Activated CD4-positive, alpha-beta T cell treated with anti-CD3 and anti-CD28 coated beads for 36 hours (primary cell): ENCODE measurements at regions of chr15 and their contacts with region 1.

Region 1: DNA sequence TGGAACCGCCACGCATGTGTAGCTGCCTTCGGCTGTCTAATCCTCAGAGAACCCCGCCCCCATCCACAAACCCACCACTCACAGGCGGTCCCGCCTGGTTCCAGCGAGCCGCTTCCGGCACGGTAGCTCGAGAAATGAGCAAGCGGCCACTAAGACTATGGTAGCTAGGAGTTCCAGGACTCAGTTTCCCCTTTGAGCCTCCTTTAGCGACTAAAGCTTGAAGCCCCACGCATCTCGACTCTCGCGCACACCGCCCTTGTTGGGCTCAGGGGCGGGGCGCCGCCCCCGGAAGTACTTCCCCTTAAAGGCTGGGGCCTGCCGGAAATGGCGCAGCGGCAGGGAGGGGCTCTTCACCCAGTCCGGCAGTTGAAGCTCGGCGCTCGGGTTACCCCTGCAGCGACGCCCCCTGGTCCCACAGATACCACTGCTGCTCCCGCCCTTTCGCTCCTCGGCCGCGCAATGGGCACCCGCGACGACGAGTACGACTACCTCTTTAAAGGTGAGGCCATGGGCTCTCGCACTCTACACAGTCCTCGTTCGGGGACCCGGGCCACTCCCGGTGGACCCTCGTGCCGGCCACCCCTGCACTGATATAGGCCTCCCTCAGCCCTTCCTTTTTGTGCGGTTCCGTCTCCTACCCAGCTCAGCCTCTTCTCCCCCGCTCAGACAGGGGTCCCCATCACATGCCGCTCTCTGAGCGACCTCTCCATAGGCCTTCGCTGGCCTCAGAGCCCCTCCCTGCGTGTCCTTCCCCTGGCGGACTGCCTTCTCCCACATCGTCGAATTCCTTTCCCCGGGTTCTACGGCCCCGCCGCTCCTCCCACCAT is at the start of gene RAB11A:
- DNase-seq: peak; percentile 97
- ATAC-seq: peak; percentile 92
- H3K4me3 Mint-ChIP-seq: peak within 1 kb of the TSS; percentile 99
- H3K27ac Mint-ChIP-seq: peak within 1 kb of the TSS; percentile 91
- H3K4me1 Mint-ChIP-seq: peaks cover 30% of the 10 kb centered on the region
- H3K27me3 Mint-ChIP-seq: no peaks in the 10 kb centered on the region
- total RNA-seq, gene RAB11A: 129 to 142 TPM

Region 2: DNA sequence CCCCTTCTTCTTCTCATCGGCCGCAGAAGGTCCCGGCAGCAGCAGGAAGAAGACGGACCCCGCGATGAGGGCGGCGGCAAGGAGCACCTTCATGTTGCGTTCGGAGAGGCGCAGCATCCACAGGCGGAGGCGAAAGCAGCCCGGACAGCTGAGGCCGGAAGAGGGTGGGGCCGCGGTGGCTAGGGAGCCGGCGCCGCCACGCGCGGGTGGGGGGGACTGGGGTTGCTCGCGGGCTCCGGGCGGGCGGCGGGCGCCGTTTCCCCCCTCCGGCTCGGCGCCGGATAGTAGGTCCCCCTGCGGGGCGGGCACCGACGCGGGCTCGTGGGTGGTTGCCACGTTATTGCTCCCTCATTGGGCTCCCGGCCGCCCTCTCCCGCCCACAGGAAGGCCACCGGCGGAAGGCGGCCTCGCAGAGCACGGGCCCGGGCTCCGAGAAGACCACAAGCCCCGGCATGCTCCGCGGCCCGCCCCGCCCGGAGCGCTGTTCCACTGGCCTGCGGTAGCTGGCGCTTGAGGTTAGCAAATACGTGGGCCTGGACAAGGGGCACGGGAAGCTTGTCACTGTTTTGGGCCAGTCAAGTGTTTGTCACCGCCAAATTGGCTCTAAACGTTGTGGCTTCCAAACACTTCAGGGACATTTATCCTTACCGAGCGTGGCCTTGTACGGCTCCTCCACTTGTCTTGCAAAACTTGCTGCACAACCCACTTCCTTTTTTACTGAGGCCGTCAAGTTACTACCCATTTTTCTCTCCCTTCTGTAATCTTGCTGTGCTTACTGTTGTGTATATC is 1706.3 kb before region 1 on chr15 and contains the start of gene PPIB:
- CTCF ChIA-PET with region 1: no interaction called
- POLR2A ChIA-PET with region 1: no interaction called
- intact Hi-C with region 1: no loop called
- DNase-seq: peak; percentile 99
- ATAC-seq: peak; percentile 94
- H3K4me3 Mint-ChIP-seq: peak within 1 kb of the TSS; percentile 86
- H3K27ac Mint-ChIP-seq: peak within 1 kb of the TSS; percentile 100
- H3K4me1 Mint-ChIP-seq: peaks cover 47% of the 10 kb centered on the region
- H3K27me3 Mint-ChIP-seq: no peaks in the 10 kb centered on the region
- total RNA-seq, gene PPIB: 221 to 233 TPM

Region 3: GRCh38 chr15:65530314-65531122 is 338.8 kb before region 1 on chr15 and contains the start of gene HACD3:
- CTCF ChIA-PET with region 1: no interaction called
- POLR2A ChIA-PET with region 1: no interaction called
- intact Hi-C with region 1: loop called in 1 of 2 experiments (anchors 5 kb)
- DNase-seq: peak; percentile 95
- ATAC-seq: peak; percentile 93
- H3K4me3 Mint-ChIP-seq: peak within 1 kb of the TSS; percentile 78
- H3K27ac Mint-ChIP-seq: peak within 1 kb of the TSS; percentile 91
- H3K4me1 Mint-ChIP-seq: peaks cover 32% of the 10 kb centered on the region
- H3K27me3 Mint-ChIP-seq: no peaks in the 10 kb centered on the region
- total RNA-seq, gene HACD3: 23.4 to 27.3 TPM

Region 4: GRCh38 chr15:65818927-65819562 is 50.3 kb before region 1 on chr15:
- CTCF ChIA-PET with region 1: interaction called, 3 read pairs
- POLR2A ChIA-PET with region 1: interaction called, 9 read pairs
- intact Hi-C with region 1: loop called in 1 of 2 experiments (anchors 2 kb)
- DNase-seq: no peak
- ATAC-seq: peak; percentile 88
- H3K4me3 Mint-ChIP-seq: peak overlapping the region; percentile 32
- H3K27ac Mint-ChIP-seq: peak overlapping the region; percentile 81
- H3K4me1 Mint-ChIP-seq: peaks cover 61% of the 10 kb centered on the region
- H3K27me3 Mint-ChIP-seq: no peaks in the 10 kb centered on the region

Region 5: DNA sequence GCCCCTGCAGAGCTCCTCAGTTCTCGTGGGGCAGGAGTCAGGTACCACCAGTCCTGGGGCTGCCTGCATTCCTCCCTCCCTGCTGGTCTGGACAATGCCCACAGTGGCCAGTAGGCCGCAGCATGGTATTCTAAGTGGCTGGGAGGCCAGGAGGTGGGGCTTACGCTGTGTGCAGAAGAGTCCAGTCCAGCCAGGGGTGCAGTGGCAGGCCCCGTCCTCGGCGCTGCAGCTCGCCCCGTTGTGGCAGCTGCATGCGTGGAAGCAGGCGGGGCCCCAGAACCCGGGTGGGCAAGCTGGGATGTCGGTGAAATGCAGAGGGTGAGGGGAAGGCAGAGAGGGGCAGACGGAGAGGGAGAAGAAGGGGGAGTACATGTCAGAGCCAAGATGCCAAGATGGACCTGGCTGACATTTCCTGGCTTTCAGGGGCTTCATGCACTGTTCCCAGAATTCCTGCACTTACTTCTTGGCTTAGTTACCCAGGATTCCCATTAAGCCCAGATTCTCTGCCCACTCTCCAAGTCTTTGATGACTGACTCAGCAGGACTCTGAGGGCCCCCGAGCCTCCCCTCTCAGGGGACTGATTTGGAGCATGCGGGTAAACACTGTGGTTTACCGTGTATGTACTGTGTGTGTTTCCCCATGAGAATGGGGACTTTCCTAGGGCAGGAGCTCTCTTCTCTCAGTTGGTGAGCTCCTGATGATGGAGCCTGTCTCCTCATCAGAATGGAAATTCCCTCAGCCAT is 47.5 kb after region 1 on chr15:
- CTCF ChIA-PET with region 1: interaction called, 5 read pairs
- POLR2A ChIA-PET with region 1: no interaction called
- intact Hi-C with region 1: loop called in 1 of 2 experiments (anchors 5 kb)
- DNase-seq: peak; percentile 71
- ATAC-seq: peak; percentile 95
- H3K4me3 Mint-ChIP-seq: no peak overlapping the region
- H3K27ac Mint-ChIP-seq: peak overlapping the region; percentile 55
- H3K4me1 Mint-ChIP-seq: peaks cover 31% of the 10 kb centered on the region
- H3K27me3 Mint-ChIP-seq: no peaks in the 10 kb centered on the region

Region 6: GRCh38 chr15:66065325-66065724 is 196.0 kb after region 1 on chr15:
- CTCF ChIA-PET with region 1: no interaction called
- POLR2A ChIA-PET with region 1: no interaction called
- intact Hi-C with region 1: no loop called
- DNase-seq: no peak
- ATAC-seq: no peak
- H3K4me3 Mint-ChIP-seq: no peak overlapping the region
- H3K27ac Mint-ChIP-seq: no peak overlapping the region
- H3K4me1 Mint-ChIP-seq: no peaks in the 10 kb centered on the region
- H3K27me3 Mint-ChIP-seq: peaks cover 3% of the 10 kb centered on the region

Region 7: GRCh38 chr15:66356345-66357236 is 487.3 kb after region 1 on chr15 and contains the start of gene TIPIN:
- CTCF ChIA-PET with region 1: no interaction called
- POLR2A ChIA-PET with region 1: no interaction called
- intact Hi-C with region 1: loop called in 1 of 2 experiments (anchors 2 kb)
- DNase-seq: peak; percentile 99
- ATAC-seq: peak; percentile 98
- H3K4me3 Mint-ChIP-seq: peak within 1 kb of the TSS; percentile 97
- H3K27ac Mint-ChIP-seq: peak within 1 kb of the TSS; percentile 99
- H3K4me1 Mint-ChIP-seq: peaks cover 24% of the 10 kb centered on the region
- H3K27me3 Mint-ChIP-seq: no peaks in the 10 kb centered on the region
- total RNA-seq, gene TIPIN: 49.9 to 50.8 TPM